Right lobe of liver (tissue), 6 donors: ENCODE measurements at regions of chr2 and their contacts with region 1.

Region 1: DNA sequence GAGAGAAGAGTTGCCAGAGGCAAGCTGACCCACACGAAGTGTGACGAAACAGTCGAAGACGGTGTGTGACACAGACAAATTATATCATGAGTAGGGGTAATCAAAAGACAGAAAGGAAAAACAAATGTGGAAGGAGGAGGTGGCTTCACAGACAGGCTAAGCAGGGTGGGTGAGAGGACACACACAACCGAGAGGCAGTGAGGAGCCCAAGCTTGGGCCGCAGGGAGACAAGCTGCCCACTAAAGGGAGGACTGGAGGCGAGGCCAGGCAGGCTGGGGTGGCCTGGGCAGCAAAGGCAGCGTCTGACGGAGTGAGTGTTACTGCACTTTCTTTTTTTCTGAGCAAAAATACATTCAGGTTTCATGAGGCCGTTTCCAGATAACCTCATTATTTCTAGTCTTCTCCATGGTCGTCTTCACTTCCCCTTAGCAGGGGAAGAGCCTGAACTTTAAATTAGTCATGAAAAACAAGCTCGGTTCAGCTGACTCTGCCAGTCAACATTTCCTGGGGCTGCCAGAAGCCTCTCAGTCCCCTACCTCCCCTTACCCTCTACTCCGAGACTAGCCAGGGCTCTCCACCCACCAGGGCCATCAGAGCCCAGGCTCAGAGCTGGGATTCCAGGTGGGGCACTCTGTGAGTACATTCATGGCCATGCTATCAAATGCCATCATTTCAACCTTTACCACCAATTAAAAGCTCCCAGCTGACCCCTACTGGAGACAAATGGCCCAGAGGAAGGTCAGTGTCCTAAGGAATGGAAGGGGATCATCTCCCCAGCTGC is 13.8 kb upstream of the ZFP36L2 start:
- DNase-seq: no peak
- ATAC-seq: peak; percentile 40 to 72 (median 54)
- H3K4me3 ChIP-seq: no peak overlapping the region
- H3K27ac ChIP-seq: peak overlapping the region in 2 of 3 donors; percentile 41 to 48
- H3K4me1 ChIP-seq: no peaks in the 10 kb centered on the region
- H3K27me3 ChIP-seq: no peaks in the 10 kb centered on the region
- CTCF ChIP-seq: peak in 2 of 4 donors; percentile 10 to 35
- POLR2A ChIP-seq: no peak

Region 2: GRCh38 chr2:42835577-42836371 is 404.4 kb before region 1 on chr2:
- intact Hi-C with region 1: loop called in 1 of 2 experiments (anchors 10 kb)
- DNase-seq: peak in 1 of 3 donors; percentile 22
- ATAC-seq: peak in 3 of 4 donors; percentile 13 to 78 (median 37)
- H3K4me3 ChIP-seq: no peak overlapping the region
- H3K27ac ChIP-seq: no peak overlapping the region
- H3K4me1 ChIP-seq: no peaks in the 10 kb centered on the region
- H3K27me3 ChIP-seq: no peaks in the 10 kb centered on the region
- CTCF ChIP-seq: no peak
- POLR2A ChIP-seq: no peak

Region 3: GRCh38 chr2:42944779-42945415 is 295.3 kb before region 1 on chr2:
- intact Hi-C with region 1: loop called in 1 of 2 experiments (anchors 10 kb)
- DNase-seq: peak in 1 of 3 donors; percentile 41
- ATAC-seq: no peak
- H3K4me3 ChIP-seq: no peak overlapping the region
- H3K27ac ChIP-seq: no peak overlapping the region
- H3K4me1 ChIP-seq: peaks cover 0 to 20% (median 6%) of the 10 kb centered on the region in 4 donors
- H3K27me3 ChIP-seq: no peaks in the 10 kb centered on the region
- CTCF ChIP-seq: no peak
- POLR2A ChIP-seq: no peak

Region 4: DNA sequence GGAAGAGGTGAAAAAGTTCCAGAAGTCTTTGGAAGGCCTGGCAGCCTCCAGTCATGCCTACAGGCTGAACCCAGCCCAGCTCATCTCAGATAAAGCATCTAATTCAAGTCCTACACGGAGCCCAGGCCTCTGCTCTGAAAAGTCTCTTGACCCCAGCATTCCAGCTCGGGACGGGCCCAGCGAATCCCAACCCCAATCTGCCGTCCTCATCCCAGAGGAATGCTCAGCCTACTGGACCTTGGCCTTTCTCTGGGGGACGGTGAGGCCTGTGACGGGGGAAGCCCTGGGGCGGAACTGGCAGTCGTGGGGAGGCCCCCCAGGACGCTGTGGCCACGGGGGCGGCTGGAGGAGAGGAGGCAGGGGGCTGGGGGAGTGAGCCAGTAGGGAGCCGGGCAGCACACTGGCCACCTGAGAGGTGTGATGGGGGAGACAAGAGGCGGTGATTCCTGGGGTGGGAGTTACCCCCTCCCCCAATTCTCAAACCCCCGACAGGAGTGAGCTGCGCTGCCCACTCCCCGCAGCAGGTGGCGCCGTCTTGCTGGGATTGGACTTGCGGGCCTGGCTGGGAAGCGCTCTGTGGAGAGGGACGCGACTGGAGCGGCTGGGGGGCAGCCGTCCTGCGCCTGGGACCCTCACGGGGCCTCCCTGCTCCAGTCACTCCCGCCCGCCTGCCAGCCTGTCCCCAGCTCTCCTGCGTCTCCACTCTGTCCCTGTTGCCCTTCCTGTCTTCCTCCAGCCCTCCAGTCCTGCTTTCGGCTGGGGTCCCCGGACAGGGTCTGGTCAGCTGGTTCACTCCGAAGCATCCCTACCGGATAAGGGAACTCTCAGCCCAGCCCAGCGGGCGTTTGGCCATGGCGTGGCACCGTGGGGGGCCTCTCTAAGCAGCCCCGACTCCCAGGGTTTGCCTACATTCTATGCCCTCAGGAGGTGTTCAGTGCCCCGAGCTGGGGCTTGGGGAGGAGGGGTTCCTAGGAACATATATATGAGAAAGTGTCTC is 265.2 kb before region 1 on chr2:
- intact Hi-C with region 1: loop called in 1 of 2 experiments (anchors 10 kb)
- DNase-seq: peak; percentile 79 to 82 (median 80)
- ATAC-seq: peak; percentile 62 to 70 (median 66)
- H3K4me3 ChIP-seq: peak overlapping the region; percentile 24 to 47 (median 33)
- H3K27ac ChIP-seq: peak overlapping the region in 2 of 3 donors; percentile 65 to 67
- H3K4me1 ChIP-seq: peaks cover 0 to 31% (median 14%) of the 10 kb centered on the region in 4 donors
- H3K27me3 ChIP-seq: no peaks in the 10 kb centered on the region
- CTCF ChIP-seq: peak; percentile 82 to 93 (median 86)
- POLR2A ChIP-seq: no peak

Region 5: DNA sequence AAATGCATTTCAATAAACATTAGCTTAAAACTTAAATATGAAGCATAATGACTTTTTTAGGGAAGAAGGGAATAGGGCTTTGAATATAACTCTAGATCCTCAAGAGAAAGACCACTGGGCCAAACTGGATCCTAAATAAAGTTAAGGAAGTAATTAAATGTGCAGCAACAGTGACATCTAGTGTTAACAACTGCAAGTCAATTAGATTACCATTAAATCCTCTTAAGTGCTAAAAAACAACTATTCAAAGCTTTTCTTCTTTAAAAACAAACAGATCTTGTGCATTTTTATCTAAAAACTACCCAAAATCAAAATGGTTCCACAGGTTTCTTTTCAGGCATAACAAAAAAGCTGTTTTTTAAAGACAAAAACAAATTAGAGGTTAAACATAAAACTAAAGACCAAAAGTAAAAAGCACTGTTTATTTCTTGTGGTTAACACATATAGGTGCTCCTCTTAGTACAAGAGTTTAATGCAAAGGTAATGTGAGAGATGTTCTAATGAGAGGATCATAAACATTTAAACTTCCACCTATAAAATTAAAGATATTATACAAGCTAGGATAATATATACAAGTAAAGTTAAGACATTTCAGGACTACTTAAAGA is 244.3 kb after region 1 on chr2:
- intact Hi-C with region 1: loop called in 1 of 2 experiments (anchors 10 kb)
- DNase-seq: no peak
- ATAC-seq: peak; percentile 59 to 66 (median 65)
- H3K4me3 ChIP-seq: no peak overlapping the region
- H3K27ac ChIP-seq: peak overlapping the region in 1 of 3 donors; percentile 88
- H3K4me1 ChIP-seq: peaks cover 0 to 46% (median 19%) of the 10 kb centered on the region in 4 donors
- H3K27me3 ChIP-seq: no peaks in the 10 kb centered on the region
- CTCF ChIP-seq: peak; percentile 59 to 81 (median 70)
- POLR2A ChIP-seq: no peak